ENCODE measurements at regions of chr11 and their contacts with region 1.

Region 1: GRCh38 chr11:84188521-84188920 is 902.4 kb upstream of the CCDC90B start:
- DNase-seq: no peak
- ATAC-seq: no peak
- H3K4me3 ChIP-seq: no peak overlapping the region
- H3K27ac ChIP-seq: no peak overlapping the region
- H3K4me1 ChIP-seq: peaks cover 0 to 4% (median 0%) of the 10 kb centered on the region in 12 donors
- H3K27me3 ChIP-seq: no peaks in the 10 kb centered on the region
- CTCF ChIP-seq: no peak
- POLR2A ChIP-seq: no peak

Region 2: DNA sequence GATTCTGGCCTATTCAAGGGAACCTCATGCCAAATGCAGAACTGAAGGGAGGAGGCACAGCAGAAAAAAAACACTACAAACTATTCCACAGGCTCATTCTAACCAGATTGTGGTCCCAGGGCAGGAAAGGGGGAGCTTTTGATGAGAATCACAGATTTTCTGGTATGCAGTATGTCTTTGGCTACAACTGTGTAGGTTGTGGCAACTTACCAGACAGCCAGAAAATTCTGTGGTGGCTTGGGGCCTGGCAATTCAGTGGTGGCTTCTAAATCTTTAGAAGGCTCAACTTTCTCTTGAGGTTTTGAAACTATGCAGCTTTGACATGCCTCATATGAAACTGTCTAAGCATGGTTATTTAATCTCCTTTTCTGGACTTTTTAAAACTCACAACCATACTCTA is 51.6 kb before region 1 on chr11:
- intact Hi-C with region 1: no loop called
- DNase-seq: no peak
- ATAC-seq: no peak
- H3K4me3 ChIP-seq: no peak overlapping the region
- H3K27ac ChIP-seq: peak overlapping the region in 1 of 12 donors; percentile 19
- H3K4me1 ChIP-seq: no peaks in the 10 kb centered on the region
- H3K27me3 ChIP-seq: no peaks in the 10 kb centered on the region
- CTCF ChIP-seq: no peak
- POLR2A ChIP-seq: no peak

Region 3: GRCh38 chr11:84249344-84250136 is 61.0 kb after region 1 on chr11:
- intact Hi-C with region 1: loop called in 1 of 10 experiments (anchors 10 kb)
- DNase-seq: no peak
- ATAC-seq: peak in 3 of 4 donors; percentile 42 to 69 (median 50)
- H3K4me3 ChIP-seq: no peak overlapping the region
- H3K27ac ChIP-seq: peak overlapping the region in 1 of 12 donors; percentile 4
- H3K4me1 ChIP-seq: peaks cover 0 to 14% (median 0%) of the 10 kb centered on the region in 12 donors
- H3K27me3 ChIP-seq: no peaks in the 10 kb centered on the region
- CTCF ChIP-seq: no peak
- POLR2A ChIP-seq: no peak

Region 4: DNA sequence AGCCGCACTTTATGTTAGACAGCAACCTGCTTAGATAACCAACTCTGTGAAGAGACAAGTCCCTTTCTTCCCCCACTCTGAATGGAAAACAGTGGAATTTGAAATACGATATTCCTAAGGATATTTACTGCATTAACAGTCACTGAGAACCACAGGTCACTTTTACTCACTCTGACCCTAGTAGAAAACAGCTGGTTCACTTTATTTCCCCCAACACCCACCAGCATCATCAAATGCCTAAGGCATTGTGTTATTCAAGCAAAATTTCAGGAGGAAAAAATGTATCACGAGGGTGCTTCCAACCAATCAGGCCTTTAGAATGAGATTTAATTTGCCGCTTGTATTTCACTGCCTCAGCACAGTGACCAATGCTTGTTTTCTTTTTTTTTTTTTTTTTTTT is 231.8 kb after region 1 on chr11:
- intact Hi-C with region 1: no loop called
- DNase-seq: no peak
- ATAC-seq: no peak
- H3K4me3 ChIP-seq: no peak overlapping the region
- H3K27ac ChIP-seq: no peak overlapping the region
- H3K4me1 ChIP-seq: no peaks in the 10 kb centered on the region
- H3K27me3 ChIP-seq: no peaks in the 10 kb centered on the region
- CTCF ChIP-seq: no peak
- POLR2A ChIP-seq: no peak

Measured in heart left ventricle (tissue), 16 donors.